ENCODE measurements at regions of chr3 and their contacts with region 1.

Region 1: GRCh38 chr3:46214751-46215352 is 6.7 kb upstream of the CCR1 start:
- DNase-seq: peak; percentile 28
- CTCF ChIP-seq: peak; percentile 66

Region 2: DNA sequence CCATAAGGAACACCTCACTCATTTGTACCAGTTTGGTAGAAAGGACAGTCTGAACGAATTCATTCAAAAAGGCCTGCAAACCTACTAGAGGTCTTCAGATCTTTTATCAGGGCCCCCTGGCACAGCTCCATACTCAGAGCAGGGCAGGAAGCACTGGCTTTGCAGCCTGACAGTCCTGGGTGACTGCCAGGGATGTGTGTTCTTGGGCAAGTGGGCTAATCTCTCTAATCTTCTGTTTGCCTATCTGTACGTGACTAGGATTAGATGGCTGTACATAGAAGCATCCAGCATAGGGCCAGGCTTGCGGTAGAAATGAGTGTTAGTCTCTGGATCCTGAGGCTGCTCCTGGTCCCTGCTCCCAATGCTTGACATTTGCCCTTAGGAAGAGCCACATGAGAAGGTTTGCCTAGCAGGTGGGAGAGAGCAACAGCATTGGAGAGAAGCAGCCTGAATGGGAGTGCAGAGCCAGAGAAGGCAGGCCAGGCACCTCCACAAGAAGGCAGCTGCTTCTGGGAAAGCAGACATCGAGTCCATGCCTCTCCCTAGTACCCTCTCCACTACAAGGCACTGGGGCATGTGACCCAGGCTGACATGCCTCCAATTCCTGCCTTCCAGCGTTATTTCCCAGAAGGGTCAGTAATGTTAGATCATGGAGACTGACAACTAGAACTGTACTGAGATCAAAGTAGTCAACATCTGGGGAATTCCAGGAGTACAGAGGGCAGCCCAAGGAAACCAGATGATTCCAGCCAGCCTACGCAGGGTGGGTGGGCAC is 272.6 kb before region 1 on chr3:
- in situ Hi-C with region 1: loop called (anchors 10 kb)
- DNase-seq: no peak
- CTCF ChIP-seq: no peak

Region 3: DNA sequence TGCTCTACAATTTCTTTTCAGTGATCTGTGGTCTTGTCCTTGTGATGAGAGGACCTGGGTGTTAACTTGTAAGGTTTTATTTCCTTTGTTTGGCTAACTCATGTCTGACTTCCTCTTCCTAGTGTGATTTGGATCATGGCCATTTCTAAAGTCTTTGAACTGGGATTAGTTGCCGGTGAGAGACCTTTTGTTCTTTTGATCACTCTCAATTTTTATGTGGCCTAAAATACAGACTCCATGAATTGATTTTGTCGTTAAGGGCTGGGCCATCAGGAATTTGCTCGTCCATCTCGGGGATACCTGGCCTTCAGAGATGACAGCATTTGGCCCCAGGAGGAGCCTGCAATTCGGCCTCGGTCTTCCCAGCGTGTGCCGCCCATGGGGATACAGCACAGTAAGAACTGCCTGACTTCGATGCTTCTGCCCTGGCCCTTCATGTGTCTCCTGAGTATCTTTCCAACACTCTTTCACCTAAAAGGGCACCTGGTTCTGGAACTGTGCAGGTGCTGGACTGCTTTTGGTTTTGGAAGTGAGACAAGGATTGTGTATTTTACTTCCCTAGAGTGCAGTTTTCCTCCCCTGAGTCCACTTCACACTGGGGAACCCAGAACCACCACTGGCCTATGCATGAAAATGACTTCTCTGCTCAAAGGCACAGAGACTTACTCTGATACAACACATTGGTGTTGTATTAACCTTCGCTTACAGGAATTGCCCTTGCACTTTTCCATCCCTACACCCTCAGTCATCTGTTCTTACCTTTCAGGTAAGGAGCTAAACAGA is 364.3 kb after region 1 on chr3:
- in situ Hi-C with region 1: no loop called
- DNase-seq: no peak
- CTCF ChIP-seq: no peak